K562 (cell line): ENCODE measurements at regions of chr1 and their contacts with region 1.

Region 1: DNA sequence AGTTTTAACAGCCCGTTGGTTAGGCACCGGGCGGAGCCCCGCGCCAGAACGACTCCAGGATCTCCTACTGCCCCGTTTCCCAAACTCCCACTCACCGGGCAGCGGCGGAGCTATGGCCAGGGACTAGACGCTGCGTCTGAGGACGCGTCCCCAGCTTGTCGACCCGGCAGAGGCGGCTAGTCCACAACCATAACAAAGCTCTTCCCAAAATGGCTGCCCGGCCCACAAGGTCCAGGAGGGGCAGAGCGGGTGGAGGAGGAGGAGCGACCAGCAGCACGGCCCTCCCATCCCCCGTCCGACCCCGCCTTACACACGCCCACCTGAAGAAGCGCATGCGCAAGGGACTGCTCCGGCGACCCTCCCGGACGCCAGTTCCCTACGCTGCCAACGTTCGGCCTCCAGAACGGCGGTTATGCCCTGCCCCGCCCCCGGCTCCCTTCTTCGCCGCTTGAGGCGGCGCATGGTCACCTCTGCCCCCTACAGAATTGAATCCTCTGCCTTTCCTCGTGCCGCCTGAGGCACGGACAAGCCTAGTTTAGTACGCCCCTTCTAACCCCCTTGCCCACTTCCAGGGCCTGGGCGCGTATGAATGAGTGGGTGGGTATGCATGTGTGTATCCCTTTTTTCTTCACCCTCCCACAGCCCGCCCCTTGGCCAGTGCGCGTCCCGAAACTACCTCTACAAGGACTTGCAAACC is at the start of gene GPBP1L1:
- DNase-seq: peak; percentile 98 to 100 (median 99)
- ATAC-seq: peak; percentile 86
- H3K4me3 ChIP-seq: peak within 1 kb of the TSS; percentile 87
- H3K27ac ChIP-seq: peak within 1 kb of the TSS; percentile 98
- H3K4me1 ChIP-seq: peaks cover 11 to 33% of the 10 kb centered on the region in 2 experiments
- H3K27me3 ChIP-seq: no peaks in the 10 kb centered on the region
- CTCF ChIP-seq: 0 out of 6 replicates have a peak, but pooled peaks of 1 of the 3 experiments have one; percentile 1
- EP300 ChIP-seq: no peak
- POLR2A ChIP-seq: peak; percentile 88
- RAD21 ChIP-seq: no peak
- polyA plus RNA-seq, gene GPBP1L1: 86.0 to 128 TPM

Region 2: GRCh38 chr1:45299981-45300668 is 386.3 kb before region 1 on chr1:
- CTCF ChIA-PET with region 1: no interaction called
- POLR2A ChIA-PET with region 1: no interaction called
- in situ Hi-C with region 1: no loop called
- intact Hi-C with region 1: no loop called
- DNase-seq: peak; percentile 65 to 85 (median 70)
- ATAC-seq: peak; percentile 44
- H3K4me3 ChIP-seq: no peak overlapping the region
- H3K27ac ChIP-seq: no peak overlapping the region
- H3K4me1 ChIP-seq: peaks cover 24 to 28% of the 10 kb centered on the region in 2 experiments
- H3K27me3 ChIP-seq: no peaks in the 10 kb centered on the region
- CTCF ChIP-seq: peak; percentile 83 to 96 (median 90)
- EP300 ChIP-seq: peak; percentile 22; the same call in 1 of the 2 replicates
- POLR2A ChIP-seq: no peak
- RAD21 ChIP-seq: peak; percentile 96 to 97

Region 3: GRCh38 chr1:45669859-45670655 is 16.4 kb before region 1 on chr1:
- CTCF ChIA-PET with region 1: no interaction called
- POLR2A ChIA-PET with region 1: interaction called, 95 read pairs
- in situ Hi-C with region 1: no loop called
- intact Hi-C with region 1: no loop called
- DNase-seq: no peak
- ATAC-seq: no peak
- H3K4me3 ChIP-seq: no peak overlapping the region
- H3K27ac ChIP-seq: no peak overlapping the region
- H3K4me1 ChIP-seq: peaks cover 0 to 3% of the 10 kb centered on the region in 2 experiments; a peak in 1 of 5 replicates
- H3K27me3 ChIP-seq: no peaks in the 10 kb centered on the region
- CTCF ChIP-seq: no peak
- EP300 ChIP-seq: no peak
- POLR2A ChIP-seq: no peak
- RAD21 ChIP-seq: no peak

Region 4: GRCh38 chr1:45750298-45751038 is 64.0 kb after region 1 on chr1 and contains the start of gene IPP:
- CTCF ChIA-PET with region 1: no interaction called
- POLR2A ChIA-PET with region 1: interaction called, 11 read pairs
- in situ Hi-C with region 1: no loop called
- intact Hi-C with region 1: loop called (anchors 1 kb)
- DNase-seq: peak; percentile 99
- ATAC-seq: peak; percentile 96
- H3K4me3 ChIP-seq: peak within 1 kb of the TSS; percentile 51
- H3K27ac ChIP-seq: peak within 1 kb of the TSS; percentile 92
- H3K4me1 ChIP-seq: peaks cover 35 to 43% of the 10 kb centered on the region in 2 experiments
- H3K27me3 ChIP-seq: no peaks in the 10 kb centered on the region
- CTCF ChIP-seq: peak; percentile 37 to 75 (median 71); a peak in 5 of 6 replicates
- EP300 ChIP-seq: peak; percentile 41; the same call in 1 of the 2 replicates
- POLR2A ChIP-seq: peak; percentile 99
- RAD21 ChIP-seq: peak; percentile 49 to 75
- polyA plus RNA-seq, gene IPP: 13.5 to 15.1 TPM

Region 5: DNA sequence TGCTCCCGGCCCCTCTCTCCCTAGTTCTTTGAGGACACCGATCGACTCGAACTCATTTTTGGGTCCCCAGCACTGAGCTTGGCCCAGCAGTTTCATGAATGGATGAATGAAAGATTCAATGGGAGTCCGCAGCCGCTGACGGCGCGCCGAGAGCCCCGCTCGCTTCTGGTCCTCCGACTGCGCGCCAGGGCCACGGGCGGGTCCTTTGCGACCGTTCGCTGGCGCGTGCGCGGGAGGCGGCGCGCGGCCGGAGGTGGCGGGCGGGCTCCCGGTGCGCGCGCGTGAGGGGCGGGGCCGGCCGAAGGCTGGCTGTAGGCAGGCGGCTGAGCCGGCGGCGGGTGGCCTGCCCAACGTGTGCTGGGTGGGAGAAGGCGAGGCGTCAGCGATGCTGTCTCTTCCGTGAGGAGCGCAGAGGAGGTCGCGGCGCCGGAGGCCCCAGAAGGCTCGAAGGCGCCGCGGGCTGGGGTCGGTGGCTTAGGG is 116.9 kb after region 1 on chr1 and contains the start of gene MAST2:
- CTCF ChIA-PET with region 1: no interaction called
- POLR2A ChIA-PET with region 1: interaction called, 3 read pairs
- in situ Hi-C with region 1: no loop called
- intact Hi-C with region 1: loop called (anchors 2 kb)
- DNase-seq: peak; percentile 96 to 98 (median 98)
- ATAC-seq: peak; percentile 91
- H3K4me3 ChIP-seq: peak within 1 kb of the TSS; percentile 69
- H3K27ac ChIP-seq: peak within 1 kb of the TSS; percentile 77
- H3K4me1 ChIP-seq: peaks cover 19 to 23% of the 10 kb centered on the region in 2 experiments
- H3K27me3 ChIP-seq: no peaks in the 10 kb centered on the region
- CTCF ChIP-seq: peak in 1 of 3 experiments; percentile 3; a peak in 1 of 6 replicates
- EP300 ChIP-seq: no peak
- POLR2A ChIP-seq: peak; percentile 83
- RAD21 ChIP-seq: no peak
- polyA plus RNA-seq, gene MAST2: 0.73 to 1.1 TPM

Region 6: DNA sequence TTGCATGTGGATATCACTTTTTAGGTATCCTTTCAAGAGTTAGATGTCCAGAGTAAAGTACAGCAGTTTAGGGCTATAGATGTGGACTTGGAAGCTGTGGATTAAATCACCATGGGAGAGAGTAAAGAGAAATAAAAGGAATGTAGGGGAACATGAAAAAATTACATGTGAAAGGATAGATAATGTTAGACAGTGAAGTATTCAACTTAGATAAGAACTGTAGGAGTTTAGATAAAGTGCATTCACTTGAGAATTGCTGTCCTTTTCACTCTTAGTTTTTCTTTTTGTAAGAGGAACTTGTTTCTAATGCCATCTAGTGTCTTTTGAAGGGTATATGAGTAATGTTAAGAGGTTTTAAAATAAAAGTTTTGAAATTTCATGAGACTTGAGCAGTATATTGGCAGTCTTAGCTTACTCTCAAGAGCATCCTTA is 157.0 kb after region 1 on chr1:
- CTCF ChIA-PET with region 1: no interaction called
- POLR2A ChIA-PET with region 1: interaction called, 6 read pairs
- in situ Hi-C with region 1: no loop called
- intact Hi-C with region 1: loop called (anchors 2 kb)
- DNase-seq: peak in 1 of 4 experiments; percentile 13
- ATAC-seq: peak; percentile 77
- H3K4me3 ChIP-seq: no peak overlapping the region
- H3K27ac ChIP-seq: no peak overlapping the region
- H3K4me1 ChIP-seq: peaks cover 0 to 3% of the 10 kb centered on the region in 2 experiments; a peak in 2 of 5 replicates
- H3K27me3 ChIP-seq: no peaks in the 10 kb centered on the region
- CTCF ChIP-seq: peak in 1 of 3 experiments; percentile 62; a peak in 3 of 6 replicates
- EP300 ChIP-seq: no peak
- POLR2A ChIP-seq: no peak
- RAD21 ChIP-seq: peak; percentile 72 to 74

Region 7: DNA sequence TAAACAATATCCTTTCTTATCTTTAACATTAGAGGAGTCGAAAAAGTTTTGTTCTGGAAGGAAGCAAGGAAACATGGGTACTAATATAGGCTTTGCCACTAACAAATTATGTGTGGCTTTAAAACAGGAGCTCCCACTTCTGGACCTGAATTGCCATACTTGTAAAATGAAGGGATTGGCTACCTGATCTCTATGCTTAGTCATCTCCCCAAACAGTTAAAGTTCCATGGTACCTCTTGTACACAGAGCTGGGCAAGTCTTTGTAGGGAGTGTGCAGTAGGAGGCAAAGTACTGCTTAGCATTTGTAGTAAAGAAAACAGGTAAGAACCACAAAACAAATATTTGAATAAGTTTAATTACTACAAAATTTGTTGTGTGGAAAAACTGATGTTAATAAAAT is 198.2 kb after region 1 on chr1:
- CTCF ChIA-PET with region 1: no interaction called
- POLR2A ChIA-PET with region 1: interaction called, 4 read pairs
- in situ Hi-C with region 1: no loop called
- intact Hi-C with region 1: loop called (anchors 5 kb)
- DNase-seq: peak in 2 of 4 experiments; percentile 25 to 50
- ATAC-seq: peak; percentile 86
- H3K4me3 ChIP-seq: no peak overlapping the region
- H3K27ac ChIP-seq: peak overlapping the region; percentile 30; the same call in 2 of the 3 replicates
- H3K4me1 ChIP-seq: peaks cover 0 to 7% of the 10 kb centered on the region in 2 experiments; a peak in 2 of 5 replicates
- H3K27me3 ChIP-seq: no peaks in the 10 kb centered on the region
- CTCF ChIP-seq: no peak
- EP300 ChIP-seq: peak; percentile 25; the same call in 1 of the 2 replicates
- POLR2A ChIP-seq: no peak
- RAD21 ChIP-seq: no peak

Region 8: DNA sequence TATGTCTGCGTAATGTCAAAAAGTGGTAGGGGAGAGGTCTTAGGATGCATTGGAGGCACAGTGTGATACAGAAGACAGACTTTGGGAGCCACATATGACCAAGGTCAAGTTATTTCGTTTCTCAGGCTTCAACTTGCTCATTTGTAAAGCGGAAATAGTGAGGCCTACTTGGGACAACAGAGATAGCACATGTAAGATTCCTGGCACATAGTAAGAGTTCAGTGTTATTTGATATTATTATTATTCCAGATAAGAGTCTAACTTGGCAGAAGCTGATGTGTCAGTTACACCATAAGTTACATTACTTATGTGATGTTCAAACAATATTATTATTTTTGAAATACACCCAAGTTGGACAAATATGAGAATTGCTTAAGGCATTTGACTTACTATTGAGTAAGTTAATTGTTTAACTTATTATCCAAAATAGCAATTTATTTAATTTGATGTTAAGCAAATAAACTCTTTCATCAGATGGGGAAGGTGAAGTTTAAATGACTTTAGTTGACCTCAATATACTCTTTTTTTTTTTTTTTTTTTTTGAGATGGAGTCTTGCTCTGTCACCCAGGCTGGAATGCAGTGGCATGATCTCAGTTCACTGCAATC is 1326.9 kb after region 1 on chr1:
- CTCF ChIA-PET with region 1: no interaction called
- POLR2A ChIA-PET with region 1: no interaction called
- in situ Hi-C with region 1: no loop called
- intact Hi-C with region 1: no loop called
- DNase-seq: no peak
- ATAC-seq: no peak
- H3K4me3 ChIP-seq: no peak overlapping the region
- H3K27ac ChIP-seq: no peak overlapping the region
- H3K4me1 ChIP-seq: no peaks in the 10 kb centered on the region
- H3K27me3 ChIP-seq: no peaks in the 10 kb centered on the region
- CTCF ChIP-seq: no peak
- EP300 ChIP-seq: no peak
- POLR2A ChIP-seq: no peak
- RAD21 ChIP-seq: no peak